ENCODE measurements at regions of chr5 and their contacts with region 1.

Region 1: DNA sequence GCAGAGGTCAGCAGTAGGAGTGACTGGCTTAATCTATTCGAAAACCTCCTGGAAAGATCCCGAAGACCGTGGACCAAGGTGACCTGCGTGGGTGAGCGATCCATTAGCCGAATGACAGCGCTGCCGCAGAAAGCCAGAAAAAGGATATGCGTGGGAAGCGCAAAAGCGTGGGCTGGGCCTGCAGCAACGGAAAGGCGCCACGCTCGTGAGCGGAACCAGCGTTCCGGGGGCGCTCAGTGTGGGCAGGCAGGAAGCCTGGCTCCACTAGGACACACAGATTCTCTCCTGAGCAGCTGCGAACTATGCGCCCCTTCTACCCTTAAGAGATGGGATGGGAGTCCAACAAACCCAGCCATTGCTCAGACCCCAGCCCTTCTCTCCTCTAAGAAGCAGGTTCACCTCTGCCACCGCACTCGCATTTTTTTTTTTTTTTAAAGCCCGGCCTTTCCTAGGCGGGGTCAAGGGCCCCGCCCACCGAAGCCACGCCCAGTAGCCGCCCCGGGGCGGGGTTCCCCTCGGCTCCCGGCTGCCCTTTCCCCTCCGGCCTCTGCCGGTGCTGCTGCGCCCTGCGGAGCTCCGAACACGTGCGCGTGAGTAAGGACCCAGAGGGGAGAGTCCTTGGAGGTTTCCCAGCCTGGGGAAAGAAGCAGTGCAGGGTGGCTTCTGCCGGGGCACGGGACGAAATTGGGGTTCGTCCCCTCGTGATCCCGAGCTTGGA is 19.8 kb upstream of the MATR3 start:
- DNase-seq: no peak
- H3K4me3 ChIP-seq: peak overlapping the region; percentile 65
- H3K27me3 ChIP-seq: no peaks in the 10 kb centered on the region
- CTCF ChIP-seq: no peak; the same call in 1 of the 2 replicates

Region 2: GRCh38 chr5:139335811-139336210 is 62.1 kb after region 1 on chr5:
- CTCF ChIA-PET with region 1: no interaction called
- POLR2A ChIA-PET with region 1: interaction called, 10 read pairs
- DNase-seq: no peak
- H3K4me3 ChIP-seq: no peak overlapping the region
- H3K27me3 ChIP-seq: no peaks in the 10 kb centered on the region
- CTCF ChIP-seq: no peak